ENCODE measurements at regions of chr16 and their contacts with region 1.

Region 1: GRCh38 chr16:50665128-50665878 is 15.8 kb downstream of the SNX20 start:
- DNase-seq: peak; percentile 81 to 92
- H3K4me3 ChIP-seq: 0 out of 2 replicates have a peak overlapping the region, but pooled peaks have one; percentile 8
- H3K4me3 Mint-ChIP-seq: peak overlapping the region; percentile 60
- H3K27ac Mint-ChIP-seq: peak overlapping the region; percentile 48
- H3K4me1 ChIP-seq: peaks cover 10% of the 10 kb centered on the region; the same call in 1 of the 2 replicates
- H3K4me1 Mint-ChIP-seq: peaks cover 21% of the 10 kb centered on the region
- H3K27me3 ChIP-seq: no peaks in the 10 kb centered on the region
- H3K27me3 Mint-ChIP-seq: no peaks in the 10 kb centered on the region
- CTCF ChIP-seq: peak; percentile 90

Region 2: GRCh38 chr16:50326949-50327402 is 338.3 kb before region 1 on chr16:
- CTCF ChIA-PET with region 1: interaction called, 3 read pairs
- POLR2A ChIA-PET with region 1: no interaction called
- intact Hi-C with region 1: loop called (anchors 2 kb)
- DNase-seq: peak in 1 of 2 experiments; percentile 53
- H3K4me3 ChIP-seq: no peak overlapping the region
- H3K4me3 Mint-ChIP-seq: no peak overlapping the region
- H3K27ac Mint-ChIP-seq: no peak overlapping the region
- H3K4me1 ChIP-seq: peaks cover 14% of the 10 kb centered on the region
- H3K4me1 Mint-ChIP-seq: peaks cover 30% of the 10 kb centered on the region
- H3K27me3 ChIP-seq: no peaks in the 10 kb centered on the region
- H3K27me3 Mint-ChIP-seq: no peaks in the 10 kb centered on the region
- CTCF ChIP-seq: peak; percentile 57 to 76

Region 3: GRCh38 chr16:50368410-50369132 is 296.7 kb before region 1 on chr16 and contains the start of gene BRD7:
- CTCF ChIA-PET with region 1: interaction called, 111 read pairs
- POLR2A ChIA-PET with region 1: no interaction called
- intact Hi-C with region 1: no loop called
- DNase-seq: peak in 1 of 2 experiments; percentile 86
- H3K4me3 ChIP-seq: peak within 1 kb of the TSS; percentile 55
- H3K4me3 Mint-ChIP-seq: peak within 1 kb of the TSS; percentile 90
- H3K27ac Mint-ChIP-seq: peak within 1 kb of the TSS; percentile 72
- H3K4me1 ChIP-seq: peaks cover 20% of the 10 kb centered on the region
- H3K4me1 Mint-ChIP-seq: peaks cover 30% of the 10 kb centered on the region
- H3K27me3 ChIP-seq: no peaks in the 10 kb centered on the region
- H3K27me3 Mint-ChIP-seq: no peaks in the 10 kb centered on the region
- CTCF ChIP-seq: peak; percentile 43 to 69
- total RNA-seq, gene BRD7: 147 and 170 TPM in 2 replicates

Region 4: GRCh38 chr16:50373780-50374179 is 291.5 kb before region 1 on chr16:
- CTCF ChIA-PET with region 1: interaction called, 111 read pairs
- POLR2A ChIA-PET with region 1: no interaction called
- intact Hi-C with region 1: loop called (anchors 1 kb)
- DNase-seq: no peak
- H3K4me3 ChIP-seq: no peak overlapping the region
- H3K4me3 Mint-ChIP-seq: no peak overlapping the region
- H3K27ac Mint-ChIP-seq: no peak overlapping the region
- H3K4me1 ChIP-seq: peaks cover 10% of the 10 kb centered on the region; the same call in 1 of the 2 replicates
- H3K4me1 Mint-ChIP-seq: peaks cover 18% of the 10 kb centered on the region
- H3K27me3 ChIP-seq: no peaks in the 10 kb centered on the region
- H3K27me3 Mint-ChIP-seq: no peaks in the 10 kb centered on the region
- CTCF ChIP-seq: no peak

Region 5: GRCh38 chr16:50467943-50468760 is 197.2 kb before region 1 on chr16:
- CTCF ChIA-PET with region 1: interaction called, 5 read pairs
- POLR2A ChIA-PET with region 1: no interaction called
- intact Hi-C with region 1: loop called (anchors 5 kb)
- DNase-seq: peak; percentile 93 to 95
- H3K4me3 ChIP-seq: peak overlapping the region; percentile 43
- H3K4me3 Mint-ChIP-seq: peak overlapping the region; percentile 74
- H3K27ac Mint-ChIP-seq: peak overlapping the region; percentile 93
- H3K4me1 ChIP-seq: peaks cover 66% of the 10 kb centered on the region
- H3K4me1 Mint-ChIP-seq: peaks cover 35% of the 10 kb centered on the region
- H3K27me3 ChIP-seq: no peaks in the 10 kb centered on the region
- H3K27me3 Mint-ChIP-seq: no peaks in the 10 kb centered on the region
- CTCF ChIP-seq: no peak

Region 6: DNA sequence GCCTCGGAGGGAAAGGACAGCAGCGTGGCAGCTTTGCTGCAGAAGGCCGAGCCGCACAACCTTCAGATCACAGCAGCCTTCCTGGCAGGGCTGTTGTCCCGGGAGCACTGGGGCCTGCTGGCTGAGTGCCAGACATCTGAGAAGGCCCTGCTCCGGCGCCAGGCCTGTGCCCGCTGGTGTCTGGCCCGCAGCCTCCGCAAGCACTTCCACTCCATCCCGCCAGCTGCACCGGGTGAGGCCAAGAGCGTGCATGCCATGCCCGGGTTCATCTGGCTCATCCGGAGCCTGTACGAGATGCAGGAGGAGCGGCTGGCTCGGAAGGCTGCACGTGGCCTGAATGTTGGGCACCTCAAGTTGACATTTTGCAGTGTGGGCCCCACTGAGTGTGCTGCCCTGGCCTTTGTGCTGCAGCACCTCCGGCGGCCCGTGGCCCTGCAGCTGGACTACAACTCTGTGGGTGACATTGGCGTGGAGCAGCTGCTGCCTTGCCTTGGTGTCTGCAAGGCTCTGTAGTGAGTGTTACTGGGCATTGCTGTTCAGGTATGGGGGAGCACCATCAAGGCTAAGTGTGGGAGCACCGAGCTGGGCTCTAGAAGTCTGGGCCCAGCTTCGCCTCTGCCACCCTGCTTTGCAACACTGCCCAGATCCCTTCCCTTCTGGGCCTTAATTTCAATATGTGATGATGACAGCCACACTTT is 46.7 kb after region 1 on chr16:
- CTCF ChIA-PET with region 1: no interaction called
- POLR2A ChIA-PET with region 1: no interaction called
- intact Hi-C with region 1: no loop called
- DNase-seq: no peak
- H3K4me3 ChIP-seq: no peak overlapping the region
- H3K4me3 Mint-ChIP-seq: no peak overlapping the region
- H3K27ac Mint-ChIP-seq: no peak overlapping the region
- H3K4me1 ChIP-seq: 0 out of 2 replicates have a peak, but pooled peaks cover 5% of the 10 kb centered on the region
- H3K4me1 Mint-ChIP-seq: no peaks in the 10 kb centered on the region
- H3K27me3 ChIP-seq: no peaks in the 10 kb centered on the region
- H3K27me3 Mint-ChIP-seq: no peaks in the 10 kb centered on the region
- CTCF ChIP-seq: no peak

Region 7: GRCh38 chr16:50741808-50742575 is 76.7 kb after region 1 on chr16 and contains the start of gene CYLD:
- CTCF ChIA-PET with region 1: interaction called, 18 read pairs
- POLR2A ChIA-PET with region 1: no interaction called
- intact Hi-C with region 1: no loop called
- DNase-seq: peak; percentile 100
- H3K4me3 ChIP-seq: peak within 1 kb of the TSS; percentile 76
- H3K4me3 Mint-ChIP-seq: peak within 1 kb of the TSS; percentile 78
- H3K27ac Mint-ChIP-seq: no peak within 1 kb of the TSS
- H3K4me1 ChIP-seq: no peaks in the 10 kb centered on the region; the same call in 1 of the 2 replicates
- H3K4me1 Mint-ChIP-seq: no peaks in the 10 kb centered on the region
- H3K27me3 ChIP-seq: peaks cover 1% of the 10 kb centered on the region; the same call in 1 of the 2 replicates
- H3K27me3 Mint-ChIP-seq: peaks cover 8% of the 10 kb centered on the region
- CTCF ChIP-seq: no peak
- total RNA-seq, gene CYLD: 9.8 and 13.1 TPM in 2 replicates

Region 8: DNA sequence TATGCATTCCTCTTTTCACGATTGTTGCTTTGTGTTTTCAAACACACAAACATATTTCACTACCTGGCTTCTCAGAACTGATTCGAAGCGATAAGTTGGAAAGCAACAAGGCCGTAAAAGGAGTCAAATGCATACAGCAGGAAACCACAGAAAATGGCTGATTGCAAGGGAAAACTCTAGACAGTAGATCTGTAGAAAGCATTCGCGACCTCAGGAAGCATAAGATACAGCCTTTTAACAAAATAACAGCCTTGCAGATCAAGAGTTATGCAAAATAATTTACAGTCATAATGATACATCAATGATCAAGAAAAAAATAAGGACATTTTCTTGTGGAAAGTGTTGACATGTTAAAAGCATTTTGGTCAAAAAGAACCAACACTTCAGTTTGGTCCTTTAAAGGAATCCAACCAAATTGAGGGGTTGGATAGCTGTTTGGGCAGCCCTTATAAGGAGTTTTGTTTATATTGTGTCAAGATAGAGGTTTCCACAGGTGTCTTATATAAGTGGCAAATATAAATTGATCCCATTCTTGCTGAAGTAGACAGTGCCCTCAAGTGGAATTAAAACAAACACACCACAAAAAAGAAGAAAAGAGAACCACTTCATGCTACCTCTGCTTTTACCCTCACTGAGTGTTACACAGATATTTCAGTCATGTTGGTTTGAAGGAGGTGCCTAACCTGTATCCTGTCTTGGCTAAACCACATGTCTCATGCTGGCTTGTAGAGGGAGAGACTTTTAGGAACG is 82.1 kb after region 1 on chr16:
- CTCF ChIA-PET with region 1: interaction called, 12 read pairs
- POLR2A ChIA-PET with region 1: no interaction called
- intact Hi-C with region 1: no loop called
- DNase-seq: peak in 1 of 2 experiments; percentile 14
- H3K4me3 ChIP-seq: no peak overlapping the region
- H3K4me3 Mint-ChIP-seq: no peak overlapping the region
- H3K27ac Mint-ChIP-seq: no peak overlapping the region
- H3K4me1 ChIP-seq: no peaks in the 10 kb centered on the region
- H3K4me1 Mint-ChIP-seq: no peaks in the 10 kb centered on the region
- H3K27me3 ChIP-seq: no peaks in the 10 kb centered on the region
- H3K27me3 Mint-ChIP-seq: no peaks in the 10 kb centered on the region
- CTCF ChIP-seq: peak; percentile 26 to 39

Measured in Caco-2 (cell line).